PC-9 (cell line): ENCODE measurements at regions of chr12 and their contacts with region 1.

Region 1: GRCh38 chr12:69719382-69720316 is 19.0 kb upstream of the RAB3IP start:
- DNase-seq: no peak
- H3K4me3 ChIP-seq: no peak overlapping the region
- H3K27ac ChIP-seq: no peak overlapping the region
- H3K4me1 ChIP-seq: no peaks in the 10 kb centered on the region
- H3K27me3 ChIP-seq: no peaks in the 10 kb centered on the region
- CTCF ChIP-seq: no peak

Region 2: DNA sequence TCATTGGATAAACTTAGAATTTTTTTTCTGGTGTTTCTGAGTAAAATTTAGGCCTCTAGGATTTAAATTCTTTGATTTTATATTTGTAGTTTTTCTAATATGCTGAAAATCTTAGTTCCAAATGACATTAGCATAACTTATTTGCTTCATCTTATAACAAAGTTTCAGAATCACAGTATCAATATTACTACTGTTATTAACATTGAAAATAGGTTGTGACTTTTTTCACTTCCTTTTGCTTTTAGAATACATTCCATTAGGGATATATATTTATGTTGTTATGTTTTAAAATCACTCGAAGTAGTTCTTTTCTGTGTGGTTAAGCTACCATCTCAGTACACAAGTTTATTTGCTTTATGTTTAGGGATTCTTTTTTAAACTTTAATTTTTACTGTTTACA is 31.8 kb after region 1 on chr12:
- CTCF ChIA-PET with region 1: no interaction called
- POLR2A ChIA-PET with region 1: interaction called, 12 read pairs
- intact Hi-C with region 1: no loop called
- DNase-seq: no peak
- H3K4me3 ChIP-seq: no peak overlapping the region
- H3K27ac ChIP-seq: no peak overlapping the region
- H3K4me1 ChIP-seq: no peaks in the 10 kb centered on the region
- H3K27me3 ChIP-seq: no peaks in the 10 kb centered on the region
- CTCF ChIP-seq: no peak